Naive thymus-derived CD8-positive, alpha-beta T cell (primary cell): ENCODE measurements at regions of chr15 and their contacts with region 1.

Region 1: GRCh38 chr15:34367101-34368081 is at the start of gene LPCAT4:
- DNase-seq: peak; percentile 82 to 95 (median 89)
- ATAC-seq: peak; percentile 85 to 86
- H3K4me3 Mint-ChIP-seq: peak within 1 kb of the TSS; percentile 94 to 99 (median 96)
- H3K27ac Mint-ChIP-seq: peak within 1 kb of the TSS; percentile 90 to 97 (median 96)
- H3K4me1 Mint-ChIP-seq: peaks cover 10 to 36% (median 29%) of the 10 kb centered on the region in 4 donors
- H3K27me3 Mint-ChIP-seq: no peaks in the 10 kb centered on the region
- polyA plus RNA-seq, gene LPCAT4: 5.3 to 10.4 (median 8.2) TPM

Region 2: GRCh38 chr15:34101366-34102175 is 265.8 kb before region 1 on chr15 and contains the starts of genes EMC7 and PGBD4:
- POLR2A ChIA-PET with region 1: interaction called, 19 read pairs
- DNase-seq: peak; percentile 94 to 100 (median 99)
- ATAC-seq: peak; percentile 97 to 98
- H3K4me3 Mint-ChIP-seq: peak within 1 kb of the TSS; percentile 93 to 100 (median 99)
- H3K27ac Mint-ChIP-seq: peak within 1 kb of the TSS; percentile 96 to 100 (median 98)
- H3K4me1 Mint-ChIP-seq: peaks cover 11 to 55% (median 40%) of the 10 kb centered on the region in 4 donors
- H3K27me3 Mint-ChIP-seq: no peaks in the 10 kb centered on the region
- polyA plus RNA-seq, gene EMC7: 88.0 to 116 (median 91.5) TPM
- polyA plus RNA-seq, gene PGBD4: 1.1 to 1.9 (median 1.4) TPM

Region 3: DNA sequence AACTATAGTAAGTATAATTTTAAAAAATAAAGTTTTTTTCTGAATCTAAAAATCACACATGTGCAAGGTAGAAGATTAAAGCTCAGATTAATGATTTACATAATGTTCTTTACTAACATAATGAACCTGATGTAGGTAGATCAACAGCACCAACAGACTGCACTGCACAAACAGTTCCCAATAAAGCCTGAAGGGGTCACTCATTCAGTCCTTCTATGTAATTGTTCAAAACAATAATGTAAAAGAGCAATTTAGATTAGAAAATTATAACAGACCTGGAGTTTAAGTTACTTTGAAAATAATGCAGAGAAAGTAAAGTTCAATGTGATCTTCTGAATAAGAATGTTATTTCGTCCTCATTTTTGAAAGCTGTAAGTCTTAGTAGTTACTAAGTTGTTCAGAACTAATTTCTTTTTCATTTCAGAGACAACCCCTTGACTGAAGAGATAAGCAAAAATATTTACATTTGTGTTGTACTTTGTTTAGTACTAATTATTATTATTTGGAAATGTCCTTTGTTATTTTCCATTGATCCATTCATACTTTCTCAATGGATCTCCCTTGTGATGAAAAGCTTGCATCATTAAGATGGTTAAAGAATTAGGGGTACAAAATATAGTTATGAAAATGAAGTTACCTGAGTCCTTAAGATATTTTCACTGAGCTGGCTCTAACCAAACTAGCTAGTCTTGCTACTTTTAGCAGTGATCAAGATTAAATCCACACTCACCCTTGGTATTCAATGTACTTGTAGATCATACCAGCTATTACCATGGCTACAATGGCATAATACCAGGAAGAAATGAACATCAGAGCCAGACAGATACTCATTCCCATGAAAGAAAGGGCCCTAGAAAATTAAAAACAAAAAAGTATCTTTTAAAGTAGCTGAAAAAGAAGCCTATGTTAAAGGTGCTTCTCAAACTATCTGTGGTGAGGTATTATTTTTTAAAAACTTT is 125.7 kb before region 1 on chr15:
- POLR2A ChIA-PET with region 1: interaction called, 11 read pairs
- DNase-seq: peak in 8 of 10 donors; percentile 8 to 67 (median 47)
- ATAC-seq: peak; percentile 85 to 87
- H3K4me3 Mint-ChIP-seq: no peak overlapping the region
- H3K27ac Mint-ChIP-seq: peak overlapping the region in 5 of 10 donors; percentile 16 to 77 (median 27)
- H3K4me1 Mint-ChIP-seq: peaks cover 0 to 8% (median 4%) of the 10 kb centered on the region in 4 donors
- H3K27me3 Mint-ChIP-seq: no peaks in the 10 kb centered on the region

Region 4: DNA sequence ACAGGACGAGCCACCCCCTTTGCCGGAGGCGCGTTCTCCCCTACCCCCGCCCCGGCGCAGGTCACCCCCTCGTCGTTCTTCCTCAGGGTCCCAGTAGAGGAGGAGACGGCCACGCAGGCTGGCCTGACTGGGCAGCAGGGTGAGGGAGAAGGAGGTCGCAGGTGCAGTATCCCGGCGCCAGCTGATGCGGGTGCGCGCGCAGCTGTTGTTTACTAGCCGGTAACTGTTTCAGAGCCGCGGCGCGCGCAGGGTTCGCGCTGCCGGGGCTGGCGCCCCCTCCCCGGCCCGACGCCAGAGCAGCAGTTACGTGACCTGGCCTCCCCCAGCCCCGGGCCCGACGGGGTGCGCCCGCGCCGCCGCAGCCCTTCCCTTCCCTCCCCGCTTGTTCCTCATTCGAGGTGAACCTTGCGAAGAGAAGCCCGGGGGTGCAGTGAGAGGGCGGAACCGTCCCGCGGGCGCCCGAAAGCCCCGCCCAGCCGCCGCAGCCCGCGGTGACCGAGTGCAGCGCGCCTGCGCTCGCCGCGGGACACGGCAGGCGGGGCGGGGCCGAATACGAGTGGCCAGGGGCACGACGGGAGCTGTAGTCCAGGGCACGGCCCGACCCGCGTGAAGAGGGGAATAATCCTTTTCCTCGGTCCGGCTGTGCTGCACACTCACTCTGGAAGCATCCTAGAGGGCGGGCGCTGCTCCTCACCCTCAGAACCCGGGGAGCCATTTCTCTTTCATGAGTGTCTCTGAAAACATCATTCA is 29.7 kb before region 1 on chr15 and contains the start of gene SLC12A6:
- POLR2A ChIA-PET with region 1: interaction called, 48 read pairs
- DNase-seq: peak; percentile 86 to 93 (median 91)
- ATAC-seq: peak; percentile 78 to 82
- H3K4me3 Mint-ChIP-seq: peak within 1 kb of the TSS; percentile 91 to 100 (median 99)
- H3K27ac Mint-ChIP-seq: peak within 1 kb of the TSS; percentile 90 to 99 (median 97)
- H3K4me1 Mint-ChIP-seq: peaks cover 23 to 73% (median 57%) of the 10 kb centered on the region in 4 donors
- H3K27me3 Mint-ChIP-seq: no peaks in the 10 kb centered on the region
- polyA plus RNA-seq, gene SLC12A6: 4.0 to 13.3 (median 7.3) TPM

Region 5: DNA sequence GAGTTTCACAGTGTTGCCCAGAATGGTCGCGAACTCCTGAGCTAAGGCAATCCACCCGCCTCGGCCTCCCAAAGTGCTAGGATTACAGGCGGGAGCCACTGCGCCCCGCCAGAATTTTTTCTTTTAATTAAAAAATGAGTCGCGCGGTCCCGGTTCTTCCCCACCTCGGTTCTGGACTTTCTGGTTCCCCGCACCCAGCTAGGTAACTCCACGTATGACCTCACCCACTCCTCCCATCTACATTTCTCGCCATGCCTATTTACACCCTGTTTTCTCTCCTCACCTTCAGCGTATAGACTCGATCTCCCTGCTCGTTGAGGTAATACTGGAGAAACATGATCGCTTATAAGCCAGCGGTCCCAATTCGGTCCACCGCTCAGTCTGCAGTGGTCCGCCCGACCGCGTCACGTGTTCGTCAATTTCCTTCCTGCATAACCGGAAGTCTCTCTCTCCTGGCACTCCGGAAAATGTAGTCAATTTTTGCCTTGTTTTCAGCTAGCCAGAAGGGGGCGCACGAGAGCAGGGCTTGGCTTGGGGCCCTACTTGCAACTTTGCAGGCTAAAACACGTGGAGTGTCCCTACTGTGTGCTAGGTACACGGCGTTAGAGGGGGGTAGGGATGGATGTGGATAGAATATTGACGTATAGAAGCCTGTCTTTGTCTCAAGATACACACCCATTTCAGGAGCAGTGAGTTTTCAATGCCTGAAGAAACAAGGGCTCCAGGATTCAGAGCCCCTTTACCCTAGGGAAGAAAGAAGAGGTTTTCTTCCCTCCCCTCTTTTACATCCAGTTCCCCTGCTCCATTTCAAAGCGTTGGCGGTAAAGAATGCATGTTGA is 24.4 kb before region 1 on chr15 and contains the starts of genes NOP10 and NUTM1:
- POLR2A ChIA-PET with region 1: interaction called, 48 read pairs
- DNase-seq: peak; percentile 84 to 95 (median 93)
- ATAC-seq: peak; percentile 85 to 87
- H3K4me3 Mint-ChIP-seq: no peak within 1 kb of the TSS
- H3K27ac Mint-ChIP-seq: peak within 1 kb of the TSS in 8 of 10 donors; percentile 12 to 90 (median 84)
- H3K4me1 Mint-ChIP-seq: peaks cover 6 to 30% (median 27%) of the 10 kb centered on the region in 4 donors
- H3K27me3 Mint-ChIP-seq: no peaks in the 10 kb centered on the region
- polyA plus RNA-seq, gene NOP10: 239 to 320 (median 257) TPM
- polyA plus RNA-seq, gene NUTM1: not detected